PC-9 (cell line): ENCODE measurements at regions of chr6 and their contacts with region 1.

Region 1: GRCh38 chr6:10847684-10848083 is 9.3 kb upstream of the MAK start:
- DNase-seq: no peak
- H3K4me3 ChIP-seq: no peak overlapping the region
- H3K27ac ChIP-seq: no peak overlapping the region
- H3K4me1 ChIP-seq: no peaks in the 10 kb centered on the region
- H3K27me3 ChIP-seq: no peaks in the 10 kb centered on the region
- CTCF ChIP-seq: peak; percentile 52; the same call in 1 of the 2 replicates

Region 2: DNA sequence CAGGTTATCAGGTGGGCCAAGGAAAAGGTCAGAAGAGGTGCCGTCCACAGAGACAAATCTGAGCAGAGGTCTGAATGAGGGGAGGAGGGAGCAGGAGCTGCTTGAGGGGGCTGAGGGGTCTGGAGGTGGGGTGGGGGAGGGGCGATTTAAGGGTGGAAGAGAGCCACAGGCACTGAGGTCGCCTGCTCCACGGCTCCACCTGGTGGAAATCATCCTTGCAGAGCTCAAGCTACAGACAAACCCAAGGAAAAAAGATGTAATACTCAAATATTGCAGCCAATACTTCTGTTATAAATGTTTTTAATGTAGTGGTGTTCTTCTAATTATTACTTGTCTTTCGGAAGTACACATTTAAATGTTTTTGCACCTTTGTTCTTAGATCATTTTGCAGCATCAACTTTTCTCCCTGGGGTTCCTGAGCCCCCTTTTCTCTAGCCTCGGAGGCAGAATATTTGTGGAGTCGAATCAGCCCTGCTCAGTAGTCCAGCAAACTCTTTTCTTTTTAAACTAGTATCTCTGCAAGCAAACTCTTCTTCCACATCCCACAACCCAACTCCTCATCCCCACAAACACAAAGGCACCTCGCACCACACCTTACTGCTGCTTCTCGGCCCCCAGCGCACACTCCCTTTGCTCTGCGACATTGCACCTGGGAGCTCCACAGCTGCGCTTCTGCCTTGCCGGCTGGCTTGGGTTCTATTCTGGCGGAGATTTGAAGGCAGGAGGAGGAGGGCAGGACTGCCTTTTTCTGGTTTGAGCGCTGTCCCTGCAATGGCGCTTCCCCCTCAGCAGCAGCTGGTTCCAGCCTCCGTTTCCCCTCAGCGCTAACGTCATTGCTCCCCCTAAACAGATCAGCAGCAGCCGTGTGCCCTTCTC is 381.8 kb before region 1 on chr6:
- CTCF ChIA-PET with region 1: no interaction called
- POLR2A ChIA-PET with region 1: no interaction called
- intact Hi-C with region 1: no loop called
- DNase-seq: peak in 1 of 2 experiments; percentile 62
- H3K4me3 ChIP-seq: no peak overlapping the region
- H3K27ac ChIP-seq: no peak overlapping the region
- H3K4me1 ChIP-seq: peaks cover 19% of the 10 kb centered on the region
- H3K27me3 ChIP-seq: no peaks in the 10 kb centered on the region
- CTCF ChIP-seq: peak; percentile 61

Region 3: GRCh38 chr6:10831609-10832008 is 16.1 kb before region 1 on chr6:
- CTCF ChIA-PET with region 1: no interaction called
- POLR2A ChIA-PET with region 1: interaction called, 14 read pairs
- intact Hi-C with region 1: no loop called
- DNase-seq: no peak
- H3K4me3 ChIP-seq: no peak overlapping the region
- H3K27ac ChIP-seq: no peak overlapping the region
- H3K4me1 ChIP-seq: peaks cover 3% of the 10 kb centered on the region; the same call in 1 of the 2 replicates
- H3K27me3 ChIP-seq: no peaks in the 10 kb centered on the region
- CTCF ChIP-seq: no peak

Region 4: GRCh38 chr6:10968776-10969175 is 121.1 kb after region 1 on chr6:
- CTCF ChIA-PET with region 1: interaction called, 11 read pairs
- POLR2A ChIA-PET with region 1: no interaction called
- intact Hi-C with region 1: no loop called
- DNase-seq: no peak
- H3K4me3 ChIP-seq: no peak overlapping the region
- H3K27ac ChIP-seq: no peak overlapping the region
- H3K4me1 ChIP-seq: no peaks in the 10 kb centered on the region
- H3K27me3 ChIP-seq: no peaks in the 10 kb centered on the region
- CTCF ChIP-seq: no peak